IMR-90 (cell line): ENCODE measurements at regions of chr9 and their contacts with region 1.

Region 1: DNA sequence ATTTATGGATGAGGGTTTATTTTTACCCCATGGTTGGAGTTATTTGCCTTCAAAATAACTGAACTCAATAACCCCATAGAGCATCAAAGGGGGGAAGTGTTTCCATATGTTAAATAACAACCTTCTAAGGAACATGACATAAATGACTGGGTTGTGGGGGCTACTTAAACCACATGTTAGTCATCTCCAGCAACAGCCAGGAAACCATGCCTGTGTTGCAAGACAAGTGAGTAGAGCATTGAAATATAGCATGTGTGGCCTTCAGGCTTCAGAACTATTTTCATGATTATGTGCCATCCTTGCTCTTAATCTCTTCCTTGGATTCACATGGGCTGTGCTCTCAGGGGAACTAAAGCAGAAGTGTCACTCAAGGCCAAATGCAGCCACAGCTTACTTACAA is 431.2 kb downstream of the AGTPBP1 start:
- DNase-seq: no peak
- ATAC-seq: no peak
- H3K4me3 ChIP-seq: no peak overlapping the region
- H3K27ac ChIP-seq: no peak overlapping the region
- H3K4me1 ChIP-seq: no peaks in the 10 kb centered on the region
- H3K27me3 ChIP-seq: no peaks in the 10 kb centered on the region
- CTCF ChIP-seq: no peak
- POLR2A ChIP-seq: no peak
- RAD21 ChIP-seq: no peak

Region 2: GRCh38 chr9:84917366-84918063 is 393.1 kb before region 1 on chr9:
- CTCF ChIA-PET with region 1: no interaction called
- POLR2A ChIA-PET with region 1: no interaction called
- dilution Hi-C with region 1: no loop called
- in situ Hi-C with region 1: no loop called
- intact Hi-C with region 1: loop called (anchors 5 kb)
- DNase-seq: no peak
- ATAC-seq: no peak
- H3K4me3 ChIP-seq: no peak overlapping the region
- H3K27ac ChIP-seq: no peak overlapping the region
- H3K4me1 ChIP-seq: no peaks in the 10 kb centered on the region
- H3K27me3 ChIP-seq: no peaks in the 10 kb centered on the region
- CTCF ChIP-seq: no peak
- POLR2A ChIP-seq: no peak
- RAD21 ChIP-seq: no peak

Region 3: GRCh38 chr9:85349046-85349445 is 38.5 kb after region 1 on chr9:
- CTCF ChIA-PET with region 1: no interaction called
- POLR2A ChIA-PET with region 1: no interaction called
- dilution Hi-C with region 1: no loop called
- in situ Hi-C with region 1: no loop called
- intact Hi-C with region 1: loop called (anchors 2 kb)
- DNase-seq: no peak
- ATAC-seq: no peak
- H3K4me3 ChIP-seq: no peak overlapping the region
- H3K27ac ChIP-seq: no peak overlapping the region
- H3K4me1 ChIP-seq: no peaks in the 10 kb centered on the region
- H3K27me3 ChIP-seq: no peaks in the 10 kb centered on the region
- CTCF ChIP-seq: no peak
- POLR2A ChIP-seq: no peak
- RAD21 ChIP-seq: no peak

Region 4: DNA sequence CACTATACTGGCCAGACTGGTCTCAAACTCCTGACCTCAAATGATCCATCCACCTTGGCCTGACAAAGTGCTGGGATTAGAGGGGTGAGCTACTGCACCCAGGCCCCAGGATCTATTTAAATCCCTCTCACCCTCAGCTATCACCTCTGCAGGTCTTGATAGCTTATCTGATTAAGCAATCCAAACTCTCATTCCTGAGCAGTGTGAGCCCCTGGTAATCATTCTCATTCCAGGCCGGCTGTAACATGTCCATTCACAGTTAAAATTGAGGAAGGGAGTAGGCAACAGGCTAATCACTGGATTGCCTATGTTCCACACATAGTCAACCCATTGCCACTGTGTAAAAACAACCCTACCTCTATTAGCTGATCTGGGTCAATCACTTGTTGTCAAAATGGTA is 320.1 kb after region 1 on chr9:
- CTCF ChIA-PET with region 1: no interaction called
- POLR2A ChIA-PET with region 1: no interaction called
- dilution Hi-C with region 1: no loop called
- in situ Hi-C with region 1: no loop called
- intact Hi-C with region 1: no loop called
- DNase-seq: no peak
- ATAC-seq: no peak
- H3K4me3 ChIP-seq: no peak overlapping the region
- H3K27ac ChIP-seq: no peak overlapping the region
- H3K4me1 ChIP-seq: no peaks in the 10 kb centered on the region
- H3K27me3 ChIP-seq: no peaks in the 10 kb centered on the region
- CTCF ChIP-seq: no peak
- POLR2A ChIP-seq: no peak
- RAD21 ChIP-seq: no peak